Activated naive CD8-positive, alpha-beta T cell treated with anti-CD3 and anti-CD28 coated beads, Interleukin-2, amount 10 ng/mL, durations not matched to agents 7 days and 5 days (primary cell): ENCODE measurements at regions of chr19 and their contacts with region 1.

Region 1: GRCh38 chr19:45178262-45179071 is at the start of gene BLOC1S3:
- DNase-seq: peak; percentile 99
- ATAC-seq: peak; percentile 89
- H3K4me3 Mint-ChIP-seq: peak within 1 kb of the TSS; percentile 95
- H3K27ac Mint-ChIP-seq: peak within 1 kb of the TSS; percentile 94
- H3K4me1 Mint-ChIP-seq: peaks cover 35% of the 10 kb centered on the region
- H3K27me3 Mint-ChIP-seq: no peaks in the 10 kb centered on the region
- total RNA-seq, gene BLOC1S3: 21.9 to 22.8 TPM

Region 2: DNA sequence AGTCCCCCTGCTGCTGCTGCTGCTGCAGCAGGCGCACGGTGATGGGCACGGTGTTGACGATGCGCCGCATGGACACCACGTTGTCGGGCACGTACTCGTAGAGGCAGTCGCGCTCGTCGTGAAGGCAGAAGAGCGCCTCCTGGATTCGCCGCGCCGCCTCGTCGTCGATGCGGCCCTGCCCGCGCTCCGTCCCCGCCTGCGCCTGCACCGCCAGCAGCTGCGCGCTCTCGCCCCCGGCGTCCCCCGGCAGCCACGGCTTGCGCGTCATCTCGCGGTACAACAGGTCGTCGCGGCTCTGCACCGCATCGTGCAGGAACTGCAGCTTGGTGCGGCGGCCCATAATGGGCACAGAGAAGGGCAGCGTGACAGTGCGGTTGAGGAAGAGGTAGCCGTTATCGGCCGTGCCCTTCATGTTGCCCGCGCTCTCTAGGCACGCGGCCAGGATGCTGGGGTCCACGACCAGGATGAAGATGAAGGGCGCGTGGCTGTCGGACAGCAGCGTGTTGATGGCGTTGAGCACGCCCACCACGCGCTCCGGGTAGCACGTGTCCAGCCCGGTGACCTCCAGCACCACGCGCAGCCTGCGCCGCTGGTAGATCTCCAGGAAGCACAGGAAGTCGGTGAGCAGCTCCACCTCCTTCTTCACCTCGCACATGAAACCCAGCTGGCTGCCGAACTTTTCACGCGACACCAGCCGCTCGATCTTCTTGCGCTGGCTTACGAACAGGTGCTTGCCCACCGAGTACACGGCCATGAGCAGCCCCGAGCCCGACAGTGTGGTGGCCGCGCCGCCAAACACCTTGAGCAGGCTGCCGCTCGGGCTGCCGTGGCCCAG is 25.7 kb before region 1 on chr19:
- POLR2A ChIA-PET with region 1: interaction called, 22 read pairs
- DNase-seq: peak; percentile 70
- ATAC-seq: peak; percentile 75
- H3K4me3 Mint-ChIP-seq: peak overlapping the region; percentile 64
- H3K27ac Mint-ChIP-seq: peak overlapping the region; percentile 63
- H3K4me1 Mint-ChIP-seq: peaks cover 19% of the 10 kb centered on the region
- H3K27me3 Mint-ChIP-seq: peaks cover 34% of the 10 kb centered on the region

Region 3: GRCh38 chr19:45164577-45165335 is 13.7 kb before region 1 on chr19:
- POLR2A ChIA-PET with region 1: interaction called, 22 read pairs
- DNase-seq: peak; percentile 74
- ATAC-seq: peak; percentile 83
- H3K4me3 Mint-ChIP-seq: peak overlapping the region; percentile 48
- H3K27ac Mint-ChIP-seq: peak overlapping the region; percentile 83
- H3K4me1 Mint-ChIP-seq: peaks cover 14% of the 10 kb centered on the region
- H3K27me3 Mint-ChIP-seq: no peaks in the 10 kb centered on the region

Region 4: GRCh38 chr19:45211751-45212381 is 33.4 kb after region 1 on chr19:
- POLR2A ChIA-PET with region 1: no interaction called
- DNase-seq: no peak
- ATAC-seq: no peak
- H3K4me3 Mint-ChIP-seq: no peak overlapping the region
- H3K27ac Mint-ChIP-seq: no peak overlapping the region
- H3K4me1 Mint-ChIP-seq: peaks cover 14% of the 10 kb centered on the region
- H3K27me3 Mint-ChIP-seq: peaks cover 34% of the 10 kb centered on the region

Region 5: DNA sequence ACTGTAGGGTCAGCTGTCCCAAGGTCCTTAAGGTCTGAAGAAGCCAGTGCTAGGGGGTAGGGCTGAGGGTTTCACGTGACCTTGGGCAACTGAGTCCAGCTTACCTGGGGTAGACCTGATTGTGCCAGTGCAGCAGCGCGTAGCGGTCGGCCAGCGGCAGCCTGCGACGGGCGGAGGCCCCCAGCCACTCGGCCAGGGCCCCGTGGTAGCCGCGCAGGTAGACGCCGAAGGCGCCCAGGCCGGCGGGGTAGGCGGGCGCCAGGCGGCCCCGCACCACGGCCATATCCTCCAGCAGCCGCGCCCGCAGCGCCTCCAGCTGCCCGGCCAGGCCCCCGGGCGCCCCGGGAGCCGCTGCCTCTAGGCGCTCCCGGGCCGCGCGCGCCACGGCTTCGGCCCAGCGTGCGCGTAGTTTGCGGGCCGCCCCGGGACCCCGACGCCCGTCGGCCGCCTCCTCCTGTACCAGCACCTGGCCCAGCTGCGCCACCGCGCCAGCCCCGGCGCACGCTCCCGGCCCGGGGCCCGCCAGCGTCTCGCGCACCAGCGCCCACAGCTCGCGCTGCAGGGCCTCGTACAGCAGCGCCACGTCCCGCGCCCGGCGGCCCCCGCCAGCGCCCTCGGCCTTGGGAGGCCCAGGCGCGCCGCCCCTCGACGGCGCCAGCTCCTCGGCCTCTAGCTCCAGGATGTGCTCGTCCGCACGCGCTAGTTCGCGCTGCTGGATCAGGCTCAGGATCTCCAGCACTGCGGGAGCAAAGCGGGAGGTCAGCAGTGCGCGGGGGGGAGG is 55.8 kb after region 1 on chr19:
- POLR2A ChIA-PET with region 1: no interaction called
- DNase-seq: no peak
- ATAC-seq: no peak
- H3K4me3 Mint-ChIP-seq: no peak overlapping the region
- H3K27ac Mint-ChIP-seq: no peak overlapping the region
- H3K4me1 Mint-ChIP-seq: peaks cover 6% of the 10 kb centered on the region
- H3K27me3 Mint-ChIP-seq: peaks cover 42% of the 10 kb centered on the region

Region 6: GRCh38 chr19:45250832-45251451 is 72.5 kb after region 1 on chr19 and contains the start of gene MARK4:
- POLR2A ChIA-PET with region 1: no interaction called
- DNase-seq: peak; percentile 77
- ATAC-seq: peak; percentile 59
- H3K4me3 Mint-ChIP-seq: peak within 1 kb of the TSS; percentile 97
- H3K27ac Mint-ChIP-seq: peak within 1 kb of the TSS; percentile 94
- H3K4me1 Mint-ChIP-seq: peaks cover 28% of the 10 kb centered on the region
- H3K27me3 Mint-ChIP-seq: peaks cover 7% of the 10 kb centered on the region
- total RNA-seq, gene MARK4: 24.8 to 26.1 TPM

Region 7: GRCh38 chr19:45296355-45296754 is 117.9 kb after region 1 on chr19:
- POLR2A ChIA-PET with region 1: no interaction called
- DNase-seq: no peak
- ATAC-seq: no peak
- H3K4me3 Mint-ChIP-seq: no peak overlapping the region
- H3K27ac Mint-ChIP-seq: no peak overlapping the region
- H3K4me1 Mint-ChIP-seq: no peaks in the 10 kb centered on the region
- H3K27me3 Mint-ChIP-seq: no peaks in the 10 kb centered on the region